ENCODE measurements at regions of chr15 and their contacts with region 1.

Region 1: DNA sequence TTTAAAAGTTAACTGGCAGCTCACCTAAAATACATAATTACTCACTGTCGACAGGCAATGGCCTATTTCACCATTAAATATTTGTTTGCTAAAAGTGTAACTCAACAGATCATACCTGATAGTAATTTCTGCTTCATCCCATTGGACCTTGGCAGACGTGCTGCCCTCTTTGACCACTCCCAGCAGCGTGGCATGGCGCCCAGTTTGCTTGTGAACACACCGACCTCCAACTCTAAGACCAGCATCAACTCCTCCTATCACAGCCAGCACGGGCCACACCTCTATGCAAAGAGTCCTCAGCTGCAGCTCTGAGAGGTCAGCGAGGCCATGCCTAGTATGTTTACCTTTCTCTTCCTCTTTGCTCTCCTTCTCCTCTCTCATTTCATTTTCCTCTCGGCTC is 80.5 kb downstream of the FBXL22 start:
- DNase-seq: peak; percentile 23 to 42
- ATAC-seq: peak in 5 of 8 donors; percentile 45 to 74 (median 62)
- H3K4me3 ChIP-seq: no peak overlapping the region
- H3K27ac ChIP-seq: no peak overlapping the region
- H3K4me1 ChIP-seq: peaks cover 0 to 5% (median 0%) of the 10 kb centered on the region in 9 donors
- H3K27me3 ChIP-seq: no peaks in the 10 kb centered on the region
- CTCF ChIP-seq: no peak

Region 2: GRCh38 chr15:63630036-63630751 is 47.5 kb before region 1 on chr15:
- intact Hi-C with region 1: loop called in 1 of 10 experiments (anchors 5 kb)
- DNase-seq: no peak
- ATAC-seq: no peak
- H3K4me3 ChIP-seq: no peak overlapping the region
- H3K27ac ChIP-seq: no peak overlapping the region
- H3K4me1 ChIP-seq: no peaks in the 10 kb centered on the region
- H3K27me3 ChIP-seq: no peaks in the 10 kb centered on the region
- CTCF ChIP-seq: no peak

Region 3: GRCh38 chr15:63891079-63891767 is 213.5 kb after region 1 on chr15:
- intact Hi-C with region 1: no loop called
- DNase-seq: peak; percentile 81
- ATAC-seq: peak; percentile 70 to 91 (median 77)
- H3K4me3 ChIP-seq: no peak overlapping the region
- H3K27ac ChIP-seq: peak overlapping the region in 1 of 10 donors; percentile 36
- H3K4me1 ChIP-seq: peaks cover 0 to 76% (median 21%) of the 10 kb centered on the region in 9 donors
- H3K27me3 ChIP-seq: no peaks in the 10 kb centered on the region
- CTCF ChIP-seq: peak; percentile 80 to 92 (median 90)